WTC11 (cell line): ENCODE measurements at regions of chr3 and their contacts with region 1.

Region 1: GRCh38 chr3:9302425-9303181 is 53.2 kb upstream of the SRGAP3 start:
- DNase-seq: peak; percentile 89
- ATAC-seq: peak; percentile 91
- H3K4me3 Mint-ChIP-seq: peak overlapping the region; percentile 70
- H3K27ac Mint-ChIP-seq: no peak overlapping the region
- H3K4me1 Mint-ChIP-seq: peaks cover 14% of the 10 kb centered on the region
- H3K27me3 Mint-ChIP-seq: peaks cover 14% of the 10 kb centered on the region
- CTCF ChIP-seq: peak; percentile 85

Region 2: DNA sequence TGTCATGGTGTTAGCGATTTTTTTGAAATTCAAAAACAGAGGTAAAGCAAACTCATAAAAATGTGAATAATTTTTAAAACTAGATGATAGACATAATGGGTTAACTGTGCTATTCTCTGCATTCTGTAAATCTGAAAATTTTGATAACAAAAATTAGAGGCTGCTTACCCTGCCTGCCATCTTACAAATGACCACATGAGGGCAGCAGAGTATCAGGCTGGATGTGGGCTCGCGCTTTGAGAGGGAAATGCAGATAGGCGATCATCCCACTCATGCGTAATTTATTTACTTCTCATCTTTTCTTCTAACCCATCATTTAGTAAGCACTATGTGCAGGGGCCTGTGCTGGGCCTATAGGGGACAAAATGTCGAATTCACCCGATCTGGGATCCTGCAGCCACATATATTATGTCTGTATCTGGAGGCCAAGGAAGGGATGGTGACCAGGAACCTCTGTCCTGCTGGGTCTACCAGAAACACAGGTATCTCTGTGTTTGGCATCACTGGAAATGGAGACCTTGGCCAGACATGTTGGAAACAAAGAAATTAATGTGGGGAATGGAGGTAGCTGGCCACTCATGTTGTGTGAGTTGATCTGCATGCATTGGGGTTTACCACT is 331.5 kb before region 1 on chr3:
- CTCF ChIA-PET with region 1: interaction called, 43 read pairs
- POLR2A ChIA-PET with region 1: no interaction called
- DNase-seq: peak; percentile 62
- ATAC-seq: peak; percentile 57; the same call in 1 of the 2 replicates
- H3K4me3 Mint-ChIP-seq: no peak overlapping the region; the same call in 1 of the 2 replicates
- H3K27ac Mint-ChIP-seq: no peak overlapping the region
- H3K4me1 Mint-ChIP-seq: peaks cover 5% of the 10 kb centered on the region; the same call in 1 of the 2 replicates
- H3K27me3 Mint-ChIP-seq: peaks cover 16% of the 10 kb centered on the region
- CTCF ChIP-seq: peak; percentile 90

Region 3: DNA sequence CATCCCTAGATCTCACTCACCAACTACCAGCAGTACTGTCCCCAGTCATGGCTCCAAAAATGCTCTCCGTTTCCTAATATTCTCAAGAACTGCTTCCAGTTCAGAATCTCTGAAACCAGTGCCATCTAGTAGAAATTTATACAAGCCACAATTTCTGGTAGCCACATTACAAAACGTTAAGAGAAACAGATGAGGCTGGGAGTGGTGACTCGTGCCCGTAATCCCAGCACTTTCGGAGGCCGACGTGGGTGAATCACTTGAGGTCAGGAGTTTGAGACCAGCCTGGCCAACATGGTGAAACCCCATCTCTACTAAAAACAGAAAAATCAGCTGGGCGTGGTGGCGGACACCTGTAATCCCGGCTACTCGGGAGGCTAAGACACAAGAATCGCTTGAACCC is 261.0 kb before region 1 on chr3:
- CTCF ChIA-PET with region 1: no interaction called
- POLR2A ChIA-PET with region 1: no interaction called
- DNase-seq: no peak
- ATAC-seq: no peak
- H3K4me3 Mint-ChIP-seq: no peak overlapping the region
- H3K27ac Mint-ChIP-seq: no peak overlapping the region
- H3K4me1 Mint-ChIP-seq: no peaks in the 10 kb centered on the region
- H3K27me3 Mint-ChIP-seq: no peaks in the 10 kb centered on the region
- CTCF ChIP-seq: no peak

Region 4: GRCh38 chr3:9102240-9102981 is 200.2 kb before region 1 on chr3:
- CTCF ChIA-PET with region 1: interaction called, 28 read pairs
- POLR2A ChIA-PET with region 1: no interaction called
- DNase-seq: peak; percentile 80
- ATAC-seq: peak; percentile 86
- H3K4me3 Mint-ChIP-seq: no peak overlapping the region; the same call in 1 of the 2 replicates
- H3K27ac Mint-ChIP-seq: peak overlapping the region; percentile 91
- H3K4me1 Mint-ChIP-seq: peaks cover 53% of the 10 kb centered on the region
- H3K27me3 Mint-ChIP-seq: no peaks in the 10 kb centered on the region; the same call in 1 of the 2 replicates
- CTCF ChIP-seq: no peak

Region 5: DNA sequence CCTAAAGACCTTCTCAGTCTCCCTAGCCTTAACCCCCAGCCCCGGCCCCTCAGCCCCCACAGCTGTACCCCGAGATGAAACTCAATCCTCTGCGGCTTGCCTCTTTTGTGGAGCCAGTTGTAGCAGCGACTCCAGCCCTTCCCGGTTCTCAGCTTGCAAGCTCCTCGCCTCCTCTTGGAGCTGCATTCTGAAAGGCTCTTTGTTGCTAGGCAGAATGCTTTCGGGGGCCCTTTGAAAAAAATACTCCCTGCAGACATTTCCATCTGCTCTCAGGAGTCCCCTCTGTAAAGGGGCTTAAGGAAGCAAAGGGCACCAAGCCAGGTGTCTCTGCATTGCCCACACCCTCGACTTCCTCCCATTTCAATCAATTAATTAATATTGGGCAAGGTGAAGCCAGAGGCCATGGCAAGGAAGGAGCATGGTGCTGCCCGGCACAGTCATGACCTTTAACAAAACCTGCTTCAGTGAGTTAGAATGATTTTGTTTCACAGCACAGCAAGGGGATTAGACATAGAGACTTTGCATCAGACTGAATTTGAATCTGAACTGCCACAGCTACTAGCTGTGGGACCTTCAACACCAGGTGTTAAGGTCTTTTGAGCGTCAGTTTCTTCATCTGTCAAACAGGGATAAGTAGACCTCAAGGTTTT is 118.7 kb before region 1 on chr3:
- CTCF ChIA-PET with region 1: interaction called, 12 read pairs
- POLR2A ChIA-PET with region 1: no interaction called
- DNase-seq: peak; percentile 63
- ATAC-seq: peak; percentile 95
- H3K4me3 Mint-ChIP-seq: peak overlapping the region; percentile 9; the same call in 1 of the 2 replicates
- H3K27ac Mint-ChIP-seq: peak overlapping the region; percentile 92
- H3K4me1 Mint-ChIP-seq: peaks cover 30% of the 10 kb centered on the region
- H3K27me3 Mint-ChIP-seq: no peaks in the 10 kb centered on the region
- CTCF ChIP-seq: no peak

Region 6: DNA sequence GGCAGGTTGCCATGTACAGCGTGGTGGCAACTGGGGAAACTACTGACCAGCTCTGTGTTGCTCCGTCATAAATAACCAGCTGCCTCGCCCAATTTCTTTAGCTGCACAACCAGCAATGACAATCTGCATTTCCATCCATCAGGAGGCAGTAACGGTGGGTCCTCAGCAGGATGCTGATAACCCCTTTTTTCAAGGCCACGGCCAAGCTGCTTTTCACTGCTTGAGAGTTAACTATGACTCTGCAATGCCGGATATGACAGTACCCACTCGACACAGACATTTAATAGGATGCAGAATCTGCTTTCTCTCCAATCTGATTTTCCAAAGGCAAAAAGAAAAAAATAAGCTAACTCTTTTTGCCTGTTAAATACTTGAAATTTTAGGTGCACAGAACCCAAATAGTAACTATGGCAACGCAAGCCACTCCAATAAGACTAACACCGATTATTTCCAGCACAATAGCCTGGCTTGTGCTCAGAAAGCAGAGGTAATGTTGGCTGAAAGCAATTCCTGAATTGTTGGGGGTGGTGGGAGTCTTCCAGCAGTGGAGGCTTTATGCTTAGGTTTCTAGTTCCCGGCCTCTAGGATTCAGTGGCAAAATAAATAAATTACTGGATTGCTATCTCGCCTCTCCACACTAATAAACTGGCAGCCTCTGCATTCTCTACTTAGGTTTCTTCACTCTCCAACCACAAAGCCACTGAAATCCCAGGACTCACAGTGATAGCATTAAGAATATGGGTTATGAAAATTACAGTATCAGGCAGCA is 22.0 kb before region 1 on chr3:
- CTCF ChIA-PET with region 1: interaction called, 12 read pairs
- POLR2A ChIA-PET with region 1: no interaction called
- DNase-seq: no peak
- ATAC-seq: peak; percentile 49
- H3K4me3 Mint-ChIP-seq: no peak overlapping the region
- H3K27ac Mint-ChIP-seq: no peak overlapping the region
- H3K4me1 Mint-ChIP-seq: peaks cover 15% of the 10 kb centered on the region
- H3K27me3 Mint-ChIP-seq: no peaks in the 10 kb centered on the region
- CTCF ChIP-seq: no peak

Region 7: GRCh38 chr3:9362731-9363530 is 60.3 kb after region 1 on chr3 and contains the start of gene THUMPD3:
- CTCF ChIA-PET with region 1: interaction called, 10 read pairs
- POLR2A ChIA-PET with region 1: no interaction called
- DNase-seq: peak; percentile 89
- ATAC-seq: peak; percentile 96
- H3K4me3 Mint-ChIP-seq: peak within 1 kb of the TSS; percentile 86
- H3K27ac Mint-ChIP-seq: peak within 1 kb of the TSS; percentile 94
- H3K4me1 Mint-ChIP-seq: peaks cover 8% of the 10 kb centered on the region
- H3K27me3 Mint-ChIP-seq: peaks cover 5% of the 10 kb centered on the region
- CTCF ChIP-seq: no peak
- total RNA-seq, gene THUMPD3: 55.2 to 67.5 TPM (median 66.0 TPM) in 3 replicates

Region 8: DNA sequence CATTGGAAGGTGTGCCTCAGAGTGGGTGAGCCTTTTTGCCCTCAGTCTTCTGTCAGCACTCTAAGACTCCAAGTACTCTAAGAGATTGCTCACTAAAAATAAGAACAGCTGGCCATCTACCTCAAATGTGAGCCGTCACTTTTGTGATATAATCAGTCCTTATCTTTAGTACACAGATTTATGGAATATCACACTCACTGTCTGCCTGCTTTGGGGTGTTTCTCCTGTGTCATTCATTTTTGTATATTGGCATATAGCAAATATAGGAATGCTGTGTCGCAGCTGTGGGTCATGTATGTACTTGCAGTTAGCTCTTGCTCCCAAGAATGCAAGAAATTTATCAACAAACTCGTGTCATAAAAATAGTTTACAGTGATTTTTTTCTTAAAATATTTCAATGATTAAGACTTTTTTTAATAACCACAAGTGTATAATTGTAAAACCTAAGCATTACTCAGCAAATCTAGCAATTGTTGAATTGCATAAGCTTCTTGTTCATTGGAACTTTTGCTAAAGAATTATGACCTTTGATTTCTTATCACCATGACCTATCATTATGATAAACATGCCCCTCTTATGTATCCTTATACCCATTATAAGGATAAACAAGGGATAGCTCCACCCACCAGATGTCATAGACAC is 113.7 kb after region 1 on chr3:
- CTCF ChIA-PET with region 1: no interaction called
- POLR2A ChIA-PET with region 1: no interaction called
- DNase-seq: no peak
- ATAC-seq: no peak
- H3K4me3 Mint-ChIP-seq: no peak overlapping the region
- H3K27ac Mint-ChIP-seq: 0 out of 2 replicates have a peak overlapping the region, but pooled peaks have one; percentile 80
- H3K4me1 Mint-ChIP-seq: peaks cover 39% of the 10 kb centered on the region
- H3K27me3 Mint-ChIP-seq: no peaks in the 10 kb centered on the region
- CTCF ChIP-seq: no peak